ENCODE measurements at regions of chr15 and their contacts with region 1.

Region 1: DNA sequence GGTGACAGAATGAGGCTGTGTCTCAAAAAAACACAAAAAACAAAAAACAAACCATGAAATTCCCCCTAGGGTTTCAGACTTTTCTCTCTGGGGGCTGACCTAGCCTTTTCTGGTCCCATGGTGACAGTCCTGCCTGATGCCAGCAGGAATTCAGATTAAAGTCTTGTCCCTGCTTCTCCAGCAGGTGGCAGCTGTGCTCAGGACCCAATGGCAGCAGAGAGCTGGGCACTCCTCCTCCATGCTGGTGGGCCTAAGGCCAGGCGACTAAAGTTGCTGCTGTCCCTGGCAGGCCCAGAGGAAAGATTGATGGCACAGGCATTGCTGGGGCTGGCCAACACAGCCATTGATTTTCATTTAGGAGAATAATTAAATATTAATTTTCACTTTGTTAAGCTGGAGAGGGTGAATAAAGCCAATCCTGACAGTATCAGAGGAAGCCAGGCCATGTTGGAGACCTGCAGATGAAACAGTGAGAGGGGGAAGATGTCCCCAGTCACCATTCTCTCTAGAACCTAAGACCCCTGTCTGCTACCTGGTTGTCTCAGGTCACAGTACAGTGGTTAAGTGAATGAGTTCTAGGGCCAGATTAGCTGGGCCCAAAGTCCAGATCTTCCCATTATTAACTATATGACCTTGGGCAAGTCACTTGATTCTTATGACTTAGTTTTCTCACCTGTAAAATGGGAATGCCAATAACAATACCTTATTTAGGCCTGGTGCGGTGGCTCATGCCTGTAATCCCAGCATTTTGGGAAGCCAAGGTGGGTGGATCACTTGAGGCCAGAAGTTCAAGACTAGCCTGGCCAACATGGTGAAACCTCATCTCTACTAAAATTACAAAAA is 7.1 kb downstream of the CELF6 start:
- DNase-seq: peak; percentile 75
- H3K4me3 Mint-ChIP-seq: no peak overlapping the region
- H3K27ac Mint-ChIP-seq: no peak overlapping the region
- H3K4me1 Mint-ChIP-seq: no peaks in the 10 kb centered on the region
- H3K27me3 Mint-ChIP-seq: no peaks in the 10 kb centered on the region

Region 2: GRCh38 chr15:71962537-71962936 is 350.3 kb before region 1 on chr15:
- CTCF ChIA-PET with region 1: no interaction called
- intact Hi-C with region 1: no loop called
- DNase-seq: no peak
- H3K4me3 Mint-ChIP-seq: no peak overlapping the region
- H3K27ac Mint-ChIP-seq: no peak overlapping the region
- H3K4me1 Mint-ChIP-seq: no peaks in the 10 kb centered on the region
- H3K27me3 Mint-ChIP-seq: no peaks in the 10 kb centered on the region

Region 3: GRCh38 chr15:72532991-72533601 is 220.3 kb after region 1 on chr15:
- CTCF ChIA-PET with region 1: interaction called, 9 read pairs
- intact Hi-C with region 1: loop called (anchors 1 kb)
- DNase-seq: peak; percentile 36
- H3K4me3 Mint-ChIP-seq: no peak overlapping the region
- H3K27ac Mint-ChIP-seq: no peak overlapping the region
- H3K4me1 Mint-ChIP-seq: peaks cover 47% of the 10 kb centered on the region
- H3K27me3 Mint-ChIP-seq: no peaks in the 10 kb centered on the region

Region 4: DNA sequence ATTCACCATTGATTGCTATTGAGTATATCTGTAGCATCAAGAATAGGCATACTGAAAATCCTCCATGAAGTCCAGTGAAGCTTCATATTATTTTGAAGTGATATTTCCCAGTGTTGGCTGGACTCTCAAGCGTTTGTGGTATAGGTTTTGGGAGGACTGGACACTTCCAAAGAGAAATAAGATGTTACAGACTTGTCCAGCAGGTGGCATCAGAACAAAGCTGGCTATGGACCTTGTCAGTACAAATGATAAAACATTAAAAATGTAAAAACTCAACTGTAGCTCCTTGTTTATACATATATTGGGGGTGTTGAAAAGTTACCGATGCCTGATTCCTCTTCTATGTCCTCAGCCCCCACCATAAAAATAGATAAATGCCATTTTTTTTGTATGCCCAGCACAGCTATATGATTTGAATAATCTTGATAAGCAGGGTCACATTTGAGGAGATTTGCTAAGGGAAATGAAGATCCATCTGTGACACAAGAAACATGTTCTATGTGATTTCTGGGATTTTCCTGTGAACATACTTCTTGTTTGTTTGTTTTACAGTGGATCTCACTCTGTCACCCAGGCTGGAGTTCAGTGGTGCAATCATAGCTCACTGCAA is 287.1 kb after region 1 on chr15:
- CTCF ChIA-PET with region 1: interaction called, 6 read pairs
- intact Hi-C with region 1: loop called (anchors 5 kb)
- DNase-seq: peak; percentile 56
- H3K4me3 Mint-ChIP-seq: no peak overlapping the region
- H3K27ac Mint-ChIP-seq: no peak overlapping the region
- H3K4me1 Mint-ChIP-seq: no peaks in the 10 kb centered on the region
- H3K27me3 Mint-ChIP-seq: no peaks in the 10 kb centered on the region

Region 5: GRCh38 chr15:72671535-72671934 is 358.7 kb after region 1 on chr15:
- CTCF ChIA-PET with region 1: no interaction called
- intact Hi-C with region 1: loop called (anchors 10 kb)
- DNase-seq: no peak
- H3K4me3 Mint-ChIP-seq: no peak overlapping the region
- H3K27ac Mint-ChIP-seq: no peak overlapping the region
- H3K4me1 Mint-ChIP-seq: peaks cover 5% of the 10 kb centered on the region
- H3K27me3 Mint-ChIP-seq: peaks cover 13% of the 10 kb centered on the region